ENCODE measurements at regions of chr12 and their contacts with region 1.

Region 1: DNA sequence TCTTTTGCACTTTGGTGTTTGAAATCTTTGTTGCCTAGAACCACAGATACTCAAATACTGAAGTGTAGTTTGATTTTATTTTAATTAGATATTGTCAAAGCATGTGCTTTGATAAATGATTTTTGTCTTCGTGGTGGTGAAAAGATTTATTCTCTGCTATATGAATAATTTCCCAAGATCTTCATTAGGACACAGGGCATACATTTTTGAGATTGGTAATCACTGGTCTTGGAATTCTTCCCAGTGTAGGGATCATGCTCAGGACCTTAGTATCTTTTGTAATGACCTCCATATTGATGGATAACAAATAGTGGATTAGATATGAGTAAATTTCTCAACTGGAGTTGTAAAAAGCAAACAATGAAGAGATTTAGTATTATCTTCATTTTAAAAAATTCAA is 28.2 kb downstream of the TBK1 start:
- DNase-seq: no peak
- ATAC-seq: no peak

Region 2: DNA sequence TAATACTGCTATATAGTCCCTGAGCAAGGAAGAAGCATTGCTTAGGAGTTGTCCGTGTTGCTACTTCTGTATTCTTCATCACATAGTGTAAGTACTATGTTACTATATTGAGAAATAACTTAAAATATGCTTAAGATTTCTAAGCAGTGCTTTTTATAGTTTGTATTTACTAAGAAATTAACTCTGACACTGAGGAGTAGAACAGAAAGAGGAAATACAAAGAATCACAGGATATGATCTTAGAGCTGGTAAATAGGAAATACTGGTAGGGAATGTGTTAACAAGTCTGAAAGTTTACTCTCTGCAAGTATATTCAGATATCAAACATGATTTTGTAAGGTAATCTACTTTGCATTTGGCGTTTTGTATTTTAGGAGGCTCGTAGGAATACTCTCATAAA is 60.5 kb before region 1 on chr12:
- intact Hi-C with region 1: loop called (anchors 10 kb)
- DNase-seq: no peak
- ATAC-seq: no peak

Measured in Right ventricle myocardium superior (tissue), 1 donor.